ENCODE measurements at regions of chr1 and their contacts with region 1.

Region 1: GRCh38 chr1:101136739-101137138 is 100.1 kb upstream of the S1PR1 start:
- DNase-seq: peak in 2 of 42 donors; percentile 4

Region 2: DNA sequence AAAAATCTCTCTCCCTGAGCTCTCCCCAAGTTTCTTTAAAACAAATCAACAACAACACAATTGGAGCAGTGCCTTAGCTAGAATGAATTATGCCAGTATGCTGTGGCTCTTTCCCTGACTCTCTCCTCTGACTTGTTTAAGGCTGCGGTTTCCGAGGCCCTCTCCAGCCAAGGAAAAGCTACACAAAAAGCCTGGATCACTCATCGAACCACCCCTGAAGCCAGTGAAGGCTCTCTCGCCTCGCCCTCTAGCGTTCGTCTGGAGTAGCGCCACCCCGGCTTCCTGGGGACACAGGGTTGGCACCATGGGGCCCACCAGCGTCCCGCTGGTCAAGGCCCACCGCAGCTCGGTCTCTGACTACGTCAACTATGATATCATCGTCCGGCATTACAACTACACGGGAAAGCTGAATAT is 101.9 kb after region 1 on chr1:
- intact Hi-C with region 1: loop called (anchors 10 kb)
- DNase-seq: peak; percentile 43 to 91 (median 80)